WTC11 (cell line): ENCODE measurements at regions of chr1 and their contacts with region 1.

Region 1: DNA sequence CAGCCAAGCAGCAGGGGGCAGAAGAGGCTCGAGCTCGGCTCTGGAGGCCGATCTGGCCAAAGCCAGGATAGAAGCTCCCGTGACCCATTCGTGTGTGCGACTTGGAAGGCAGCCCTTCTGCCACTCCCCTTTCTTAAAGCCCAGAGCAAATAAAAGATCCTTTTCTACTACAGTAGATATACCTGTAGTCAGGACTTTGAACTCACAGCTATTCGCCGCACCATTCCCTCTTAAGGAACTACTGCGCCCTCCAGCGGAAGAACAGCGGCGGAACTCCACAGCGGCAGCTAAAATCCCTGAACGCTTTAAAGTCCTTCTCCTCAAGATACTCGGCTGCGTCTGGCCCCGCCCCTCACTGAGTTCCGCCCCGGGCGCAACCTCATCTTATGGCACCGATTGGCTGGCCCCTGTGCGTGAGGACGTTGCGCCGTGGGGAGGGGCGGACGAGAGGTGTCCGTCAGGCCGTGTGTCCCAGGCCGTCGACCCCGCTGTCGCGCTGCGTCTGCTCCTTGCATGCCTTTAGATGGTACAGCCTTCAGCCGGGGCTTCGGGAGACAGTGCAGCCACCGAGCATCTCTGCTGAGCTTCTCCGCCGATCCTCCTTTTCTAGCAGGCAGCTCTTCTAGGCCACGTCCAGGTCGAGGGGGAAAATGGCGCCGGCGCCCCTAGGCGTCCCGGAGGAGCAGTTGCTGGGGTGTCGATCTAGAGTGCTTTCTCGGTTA is at the start of gene LRIG2:
- DNase-seq: peak; percentile 100
- ATAC-seq: peak; percentile 96
- H3K4me3 Mint-ChIP-seq: peak within 1 kb of the TSS; percentile 98
- H3K27ac Mint-ChIP-seq: peak within 1 kb of the TSS; percentile 97
- H3K4me1 Mint-ChIP-seq: peaks cover 31% of the 10 kb centered on the region
- H3K27me3 Mint-ChIP-seq: no peaks in the 10 kb centered on the region
- CTCF ChIP-seq: peak; percentile 75
- total RNA-seq, gene LRIG2: 22.5 to 23.5 TPM (median 22.9 TPM) in 3 replicates

Region 2: GRCh38 chr1:112715264-112716053 is 357.5 kb before region 1 on chr1 and contains the start of gene PPM1J:
- CTCF ChIA-PET with region 1: interaction called, 115 read pairs
- POLR2A ChIA-PET with region 1: interaction called, 3 read pairs
- DNase-seq: peak; percentile 100
- ATAC-seq: peak; percentile 85
- H3K4me3 Mint-ChIP-seq: peak within 1 kb of the TSS; percentile 81
- H3K27ac Mint-ChIP-seq: no peak within 1 kb of the TSS
- H3K4me1 Mint-ChIP-seq: peaks cover 50% of the 10 kb centered on the region
- H3K27me3 Mint-ChIP-seq: peaks cover 43% of the 10 kb centered on the region
- CTCF ChIP-seq: no peak
- total RNA-seq, gene PPM1J: 19.3 to 23.5 TPM (median 22.6 TPM) in 3 replicates

Region 3: DNA sequence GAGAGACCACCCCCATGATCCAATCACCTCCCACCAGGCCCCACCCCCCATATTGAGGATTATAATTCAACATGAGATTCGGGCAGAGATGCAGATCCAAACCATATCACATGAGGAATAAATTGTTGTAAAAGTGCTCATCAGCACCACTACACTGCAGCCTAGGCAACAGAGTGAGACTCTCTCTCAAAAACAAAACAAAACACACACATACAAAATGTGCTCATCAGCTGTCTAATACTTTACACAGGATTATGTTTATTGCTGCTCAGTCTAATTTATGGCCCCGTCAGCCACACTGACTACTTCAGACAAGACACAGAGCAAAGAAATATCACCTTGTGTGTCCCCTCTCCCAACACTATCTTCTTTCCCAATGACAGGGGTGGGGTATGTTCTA is 284.9 kb before region 1 on chr1:
- CTCF ChIA-PET with region 1: no interaction called
- POLR2A ChIA-PET with region 1: no interaction called
- DNase-seq: no peak
- ATAC-seq: no peak
- H3K4me3 Mint-ChIP-seq: no peak overlapping the region
- H3K27ac Mint-ChIP-seq: no peak overlapping the region
- H3K4me1 Mint-ChIP-seq: peaks cover 28% of the 10 kb centered on the region
- H3K27me3 Mint-ChIP-seq: peaks cover 44% of the 10 kb centered on the region
- CTCF ChIP-seq: no peak

Region 4: GRCh38 chr1:112818990-112819689 is 253.8 kb before region 1 on chr1:
- CTCF ChIA-PET with region 1: interaction called, 10 read pairs
- POLR2A ChIA-PET with region 1: interaction called, 18 read pairs
- DNase-seq: no peak
- ATAC-seq: no peak
- H3K4me3 Mint-ChIP-seq: peak overlapping the region; percentile 14; the same call in 1 of the 2 replicates
- H3K27ac Mint-ChIP-seq: peak overlapping the region; percentile 98
- H3K4me1 Mint-ChIP-seq: peaks cover 45% of the 10 kb centered on the region
- H3K27me3 Mint-ChIP-seq: no peaks in the 10 kb centered on the region
- CTCF ChIP-seq: no peak

Region 5: DNA sequence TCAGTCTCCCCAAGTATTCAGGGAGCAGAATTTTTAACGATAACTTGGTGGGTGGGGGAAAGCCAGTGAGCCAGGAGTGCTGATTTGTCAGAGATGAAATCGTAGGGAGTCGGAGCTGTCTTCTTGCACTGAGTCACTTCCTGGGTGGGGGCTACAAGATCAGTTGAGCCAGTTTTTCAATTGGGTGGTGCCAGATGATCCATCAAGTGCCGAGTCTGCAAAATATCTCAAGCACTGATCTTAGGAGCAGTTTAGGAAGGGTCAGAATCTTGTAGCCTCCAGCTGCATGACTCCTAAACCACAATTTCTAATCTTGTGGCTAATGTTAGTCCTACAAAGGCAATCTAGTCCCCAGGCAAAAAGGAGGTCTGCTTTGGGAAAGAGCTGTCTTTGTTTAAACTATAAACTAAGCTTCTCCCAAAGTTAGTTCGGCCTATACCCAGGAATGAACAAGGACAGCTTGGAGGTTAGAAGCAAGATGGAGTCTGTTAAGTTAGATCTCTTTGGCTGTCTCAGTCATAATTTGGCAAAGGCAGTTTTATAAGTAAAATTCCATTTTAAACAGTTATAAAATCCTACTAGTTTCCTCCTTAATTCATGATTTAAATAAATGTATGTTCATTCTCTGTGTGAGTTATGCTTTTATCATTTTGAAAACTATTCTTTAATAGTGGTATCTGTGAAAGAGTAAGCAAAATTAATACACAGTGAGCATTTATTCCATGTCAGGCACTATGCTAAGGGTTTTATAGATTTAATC is 168.7 kb before region 1 on chr1:
- CTCF ChIA-PET with region 1: interaction called, 20 read pairs
- POLR2A ChIA-PET with region 1: interaction called, 3 read pairs
- DNase-seq: no peak
- ATAC-seq: no peak
- H3K4me3 Mint-ChIP-seq: no peak overlapping the region
- H3K27ac Mint-ChIP-seq: peak overlapping the region; percentile 55
- H3K4me1 Mint-ChIP-seq: peaks cover 55% of the 10 kb centered on the region
- H3K27me3 Mint-ChIP-seq: no peaks in the 10 kb centered on the region
- CTCF ChIP-seq: no peak

Region 6: GRCh38 chr1:112998592-112999235 is 74.2 kb before region 1 on chr1:
- CTCF ChIA-PET with region 1: interaction called, 12 read pairs
- POLR2A ChIA-PET with region 1: no interaction called
- DNase-seq: no peak
- ATAC-seq: no peak
- H3K4me3 Mint-ChIP-seq: no peak overlapping the region
- H3K27ac Mint-ChIP-seq: no peak overlapping the region
- H3K4me1 Mint-ChIP-seq: no peaks in the 10 kb centered on the region
- H3K27me3 Mint-ChIP-seq: no peaks in the 10 kb centered on the region
- CTCF ChIP-seq: no peak

Region 7: DNA sequence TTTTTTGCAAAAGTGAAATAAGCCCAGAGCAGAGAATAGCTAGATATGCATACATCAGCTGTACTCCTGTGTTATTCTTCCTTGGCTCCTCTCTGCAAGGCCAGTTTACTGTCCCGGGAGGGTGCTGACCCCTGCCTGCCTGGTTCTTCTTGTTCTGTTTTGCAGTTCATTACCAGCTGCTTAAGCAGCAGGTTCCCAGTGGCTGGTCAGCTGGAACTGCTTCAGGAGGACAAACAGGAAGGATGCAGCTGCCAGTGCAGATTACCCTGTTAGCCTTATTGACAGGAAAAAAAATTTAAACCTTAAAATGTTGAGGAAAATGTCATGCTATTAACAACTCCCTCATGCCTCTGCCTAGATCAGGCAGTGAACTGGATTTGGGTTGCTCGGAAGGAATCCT is 15.9 kb before region 1 on chr1:
- CTCF ChIA-PET with region 1: interaction called, 80 read pairs
- POLR2A ChIA-PET with region 1: interaction called, 7 read pairs
- DNase-seq: peak; percentile 36
- ATAC-seq: peak; percentile 77
- H3K4me3 Mint-ChIP-seq: no peak overlapping the region
- H3K27ac Mint-ChIP-seq: peak overlapping the region; percentile 66
- H3K4me1 Mint-ChIP-seq: peaks cover 44% of the 10 kb centered on the region
- H3K27me3 Mint-ChIP-seq: no peaks in the 10 kb centered on the region
- CTCF ChIP-seq: no peak

Region 8: DNA sequence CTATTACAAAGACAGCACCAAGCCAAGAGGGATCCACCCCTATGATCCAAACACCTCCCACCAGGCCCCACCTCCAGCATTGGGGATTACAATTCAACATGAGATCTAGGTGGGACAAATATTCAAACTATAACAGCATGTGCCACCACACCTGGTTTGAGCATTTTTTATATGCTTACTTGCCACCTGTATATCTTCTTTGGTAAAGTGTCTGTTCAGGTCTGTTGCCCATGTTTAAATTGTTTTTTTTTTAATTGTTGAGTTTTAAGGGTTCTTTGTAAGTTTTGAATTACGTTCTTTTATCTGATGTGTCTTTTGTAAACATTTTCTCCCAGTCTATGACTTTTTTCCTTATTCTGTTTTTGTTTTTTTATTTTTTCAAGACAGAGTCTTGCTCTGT is 83.5 kb after region 1 on chr1:
- CTCF ChIA-PET with region 1: no interaction called
- POLR2A ChIA-PET with region 1: no interaction called
- DNase-seq: no peak
- ATAC-seq: no peak
- H3K4me3 Mint-ChIP-seq: no peak overlapping the region
- H3K27ac Mint-ChIP-seq: no peak overlapping the region
- H3K4me1 Mint-ChIP-seq: peaks cover 22% of the 10 kb centered on the region
- H3K27me3 Mint-ChIP-seq: peaks cover 3% of the 10 kb centered on the region
- CTCF ChIP-seq: no peak